ENCODE measurements at regions of chr7 and their contacts with region 1.

Region 1: GRCh38 chr7:50418086-50418515 is 32.0 kb downstream of the FIGNL1 start:
- DNase-seq: peak; percentile 88
- H3K4me3 Mint-ChIP-seq: no peak overlapping the region
- H3K27ac Mint-ChIP-seq: no peak overlapping the region
- H3K4me1 Mint-ChIP-seq: no peaks in the 10 kb centered on the region
- H3K27me3 Mint-ChIP-seq: no peaks in the 10 kb centered on the region
- CTCF ChIP-seq: peak; percentile 75

Region 2: GRCh38 chr7:50142425-50143017 is 275.6 kb before region 1 on chr7:
- CTCF ChIA-PET with region 1: interaction called, 19 read pairs
- POLR2A ChIA-PET with region 1: interaction called, 3 read pairs
- intact Hi-C with region 1: loop called (anchors 1 kb)
- DNase-seq: peak; percentile 53
- H3K4me3 Mint-ChIP-seq: no peak overlapping the region
- H3K27ac Mint-ChIP-seq: no peak overlapping the region
- H3K4me1 Mint-ChIP-seq: no peaks in the 10 kb centered on the region
- H3K27me3 Mint-ChIP-seq: peaks cover 40% of the 10 kb centered on the region
- CTCF ChIP-seq: peak; percentile 51

Region 3: GRCh38 chr7:50185951-50186682 is 232.0 kb before region 1 on chr7:
- CTCF ChIA-PET with region 1: interaction called, 11 read pairs
- POLR2A ChIA-PET with region 1: no interaction called
- intact Hi-C with region 1: no loop called
- DNase-seq: no peak
- H3K4me3 Mint-ChIP-seq: no peak overlapping the region
- H3K27ac Mint-ChIP-seq: no peak overlapping the region
- H3K4me1 Mint-ChIP-seq: no peaks in the 10 kb centered on the region
- H3K27me3 Mint-ChIP-seq: peaks cover 36% of the 10 kb centered on the region
- CTCF ChIP-seq: no peak

Region 4: GRCh38 chr7:50212666-50213621 is 205.2 kb before region 1 on chr7:
- CTCF ChIA-PET with region 1: interaction called, 214 read pairs
- POLR2A ChIA-PET with region 1: no interaction called
- intact Hi-C with region 1: no loop called
- DNase-seq: no peak
- H3K4me3 Mint-ChIP-seq: no peak overlapping the region
- H3K27ac Mint-ChIP-seq: no peak overlapping the region
- H3K4me1 Mint-ChIP-seq: no peaks in the 10 kb centered on the region
- H3K27me3 Mint-ChIP-seq: peaks cover 63% of the 10 kb centered on the region
- CTCF ChIP-seq: no peak

Region 5: GRCh38 chr7:50400114-50400513 is 18.0 kb before region 1 on chr7:
- CTCF ChIA-PET with region 1: interaction called, 12 read pairs
- POLR2A ChIA-PET with region 1: no interaction called
- intact Hi-C with region 1: no loop called
- DNase-seq: no peak
- H3K4me3 Mint-ChIP-seq: no peak overlapping the region
- H3K27ac Mint-ChIP-seq: no peak overlapping the region
- H3K4me1 Mint-ChIP-seq: no peaks in the 10 kb centered on the region
- H3K27me3 Mint-ChIP-seq: peaks cover 93% of the 10 kb centered on the region
- CTCF ChIP-seq: no peak

Region 6: DNA sequence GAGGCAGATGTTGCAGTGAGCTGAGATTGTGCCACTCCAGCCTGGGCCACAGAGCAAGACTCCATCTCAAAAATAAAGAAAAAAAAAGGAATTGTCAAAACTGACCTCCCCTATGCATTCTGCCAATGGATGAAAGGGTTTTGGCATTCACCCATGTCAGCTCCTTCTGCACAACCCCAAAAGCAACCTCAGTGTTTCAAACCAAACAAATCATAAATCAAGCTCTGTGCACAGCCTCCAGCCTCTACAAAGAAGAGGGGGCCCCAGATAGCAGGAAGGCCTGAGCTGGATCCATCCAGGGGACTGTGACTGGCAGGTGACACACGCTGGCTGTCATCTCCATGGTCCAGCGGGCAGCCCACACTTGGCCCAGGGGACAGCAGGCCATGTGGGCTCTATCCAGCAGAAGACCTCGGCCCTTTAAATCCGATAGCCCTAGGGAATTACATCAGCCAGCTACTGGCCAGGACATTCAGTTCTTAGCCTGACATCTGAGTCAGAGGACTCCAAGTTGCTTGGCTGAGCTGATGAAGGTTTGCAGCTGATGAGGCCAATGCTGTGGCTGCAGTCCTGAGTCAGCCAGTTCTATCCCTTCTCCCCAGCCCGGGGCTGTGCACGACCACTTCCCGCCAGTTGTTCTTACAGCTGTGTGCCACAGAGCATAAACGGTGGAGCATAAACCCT is 84.0 kb after region 1 on chr7:
- CTCF ChIA-PET with region 1: no interaction called
- POLR2A ChIA-PET with region 1: no interaction called
- intact Hi-C with region 1: no loop called
- DNase-seq: peak; percentile 95
- H3K4me3 Mint-ChIP-seq: peak overlapping the region; percentile 58
- H3K27ac Mint-ChIP-seq: peak overlapping the region; percentile 82
- H3K4me1 Mint-ChIP-seq: peaks cover 71% of the 10 kb centered on the region
- H3K27me3 Mint-ChIP-seq: no peaks in the 10 kb centered on the region
- CTCF ChIP-seq: no peak